WTC11 (cell line): ENCODE measurements at regions of chr11 and their contacts with region 1.

Region 1: DNA sequence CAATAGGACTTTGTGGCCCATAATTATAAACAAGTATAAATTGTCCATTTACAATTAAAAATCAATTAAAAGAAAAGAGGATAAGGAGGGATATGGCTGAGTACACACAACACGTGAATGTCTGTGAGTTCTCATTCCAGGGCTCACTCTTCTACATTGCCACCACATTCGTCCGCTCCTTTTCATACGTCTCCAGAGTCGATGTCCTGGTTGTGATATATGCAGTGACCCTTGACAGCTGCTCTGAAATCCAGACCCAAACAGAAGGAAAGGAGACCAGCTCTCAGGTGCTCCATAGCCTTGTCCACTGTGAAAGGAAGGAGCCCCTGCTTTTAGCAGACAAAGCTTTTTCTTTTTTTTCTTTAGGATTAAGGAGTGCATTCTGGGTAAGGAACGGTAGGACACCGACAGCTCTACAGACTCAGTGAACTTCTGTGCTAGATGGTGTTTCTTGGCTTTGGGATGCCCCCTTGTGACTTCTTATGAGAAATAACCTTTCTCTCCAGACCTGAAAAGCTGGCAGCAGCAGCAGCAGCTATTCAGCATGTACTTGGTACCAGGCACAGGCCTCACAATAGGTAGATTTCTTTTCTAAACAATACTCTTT is 19.7 kb upstream of the DNAJB13 start:
- DNase-seq: peak; percentile 34
- ATAC-seq: peak; percentile 99
- H3K4me3 Mint-ChIP-seq: no peak overlapping the region
- H3K27ac Mint-ChIP-seq: no peak overlapping the region
- H3K4me1 Mint-ChIP-seq: 0 out of 2 replicates have a peak, but pooled peaks cover 2% of the 10 kb centered on the region
- H3K27me3 Mint-ChIP-seq: no peaks in the 10 kb centered on the region
- CTCF ChIP-seq: no peak

Region 2: GRCh38 chr11:73729594-73730206 is 201.4 kb before region 1 on chr11:
- CTCF ChIA-PET with region 1: interaction called, 15 read pairs
- POLR2A ChIA-PET with region 1: interaction called, 4 read pairs
- DNase-seq: peak; percentile 67
- ATAC-seq: peak; percentile 92
- H3K4me3 Mint-ChIP-seq: no peak overlapping the region
- H3K27ac Mint-ChIP-seq: peak overlapping the region; percentile 34; the same call in 1 of the 2 replicates
- H3K4me1 Mint-ChIP-seq: peaks cover 9% of the 10 kb centered on the region
- H3K27me3 Mint-ChIP-seq: no peaks in the 10 kb centered on the region
- CTCF ChIP-seq: peak; percentile 64

Region 3: GRCh38 chr11:73760679-73761402 is 170.3 kb before region 1 on chr11 and contains the start of gene RAB6A:
- CTCF ChIA-PET with region 1: interaction called, 27 read pairs
- POLR2A ChIA-PET with region 1: no interaction called
- DNase-seq: peak; percentile 99
- ATAC-seq: peak; percentile 92
- H3K4me3 Mint-ChIP-seq: peak within 1 kb of the TSS; percentile 95
- H3K27ac Mint-ChIP-seq: peak within 1 kb of the TSS; percentile 94
- H3K4me1 Mint-ChIP-seq: peaks cover 28% of the 10 kb centered on the region
- H3K27me3 Mint-ChIP-seq: no peaks in the 10 kb centered on the region
- CTCF ChIP-seq: no peak
- total RNA-seq, gene RAB6A: 103 to 114 TPM (median 107 TPM) in 3 replicates

Region 4: GRCh38 chr11:73779084-73779902 is 151.8 kb before region 1 on chr11:
- CTCF ChIA-PET with region 1: interaction called, 10 read pairs
- POLR2A ChIA-PET with region 1: interaction called, 6 read pairs
- DNase-seq: peak; percentile 99
- ATAC-seq: peak; percentile 98
- H3K4me3 Mint-ChIP-seq: peak overlapping the region; percentile 98
- H3K27ac Mint-ChIP-seq: peak overlapping the region; percentile 100
- H3K4me1 Mint-ChIP-seq: peaks cover 13% of the 10 kb centered on the region
- H3K27me3 Mint-ChIP-seq: no peaks in the 10 kb centered on the region; the same call in 1 of the 2 replicates
- CTCF ChIP-seq: no peak

Region 5: DNA sequence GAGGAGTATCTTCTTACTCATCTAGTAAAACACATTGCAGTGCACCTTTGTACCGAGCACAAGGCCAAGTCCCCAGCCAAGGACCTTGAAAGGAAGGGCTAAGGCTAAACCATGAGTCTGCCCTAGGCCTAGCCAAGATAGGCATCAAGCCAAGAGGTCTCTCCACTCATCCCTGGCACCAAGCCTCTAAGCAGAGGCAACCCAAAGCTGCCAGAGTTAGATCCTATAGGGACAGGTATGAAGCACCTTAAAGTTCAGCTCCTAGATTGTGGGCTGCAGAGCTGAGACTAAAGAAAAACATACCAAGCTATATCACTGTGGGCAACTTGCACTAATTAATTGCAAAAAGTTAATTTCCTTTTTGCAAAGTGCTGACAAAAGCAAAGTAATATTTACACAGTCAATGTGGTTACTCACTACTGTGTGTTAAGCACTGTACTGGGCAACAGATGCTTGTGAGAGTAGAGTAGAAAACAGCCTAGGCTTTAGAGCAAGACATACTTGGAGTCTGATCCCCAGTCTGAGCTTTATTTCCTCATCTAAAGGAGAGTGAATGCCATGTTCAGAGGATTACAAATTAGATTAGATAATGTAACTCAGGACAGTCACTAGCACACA is 61.7 kb before region 1 on chr11:
- CTCF ChIA-PET with region 1: interaction called, 10 read pairs
- POLR2A ChIA-PET with region 1: no interaction called
- DNase-seq: no peak
- ATAC-seq: no peak; the same call in 1 of the 2 replicates
- H3K4me3 Mint-ChIP-seq: no peak overlapping the region
- H3K27ac Mint-ChIP-seq: peak overlapping the region; percentile 28
- H3K4me1 Mint-ChIP-seq: peaks cover 5% of the 10 kb centered on the region; the same call in 1 of the 2 replicates
- H3K27me3 Mint-ChIP-seq: no peaks in the 10 kb centered on the region
- CTCF ChIP-seq: no peak

Region 6: DNA sequence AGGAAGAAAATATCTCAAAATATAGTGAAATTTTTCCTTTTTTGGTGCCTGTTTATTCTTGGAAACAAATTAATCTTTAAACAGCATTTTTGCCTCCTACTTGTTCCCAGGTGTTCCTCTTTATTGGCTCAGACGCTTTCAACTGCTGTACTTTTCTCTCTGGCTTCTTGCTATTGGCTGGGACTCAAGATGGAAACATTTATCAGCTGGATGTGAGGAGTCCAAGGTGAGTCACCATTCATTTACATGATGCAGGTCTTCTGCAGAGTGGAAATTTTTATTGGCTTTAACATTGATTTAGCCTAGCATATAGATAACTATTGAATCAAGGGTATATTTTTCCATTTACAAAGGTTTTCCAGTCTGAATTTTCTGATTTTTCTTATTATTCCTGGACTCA is 14.7 kb before region 1 on chr11:
- CTCF ChIA-PET with region 1: interaction called, 11 read pairs
- POLR2A ChIA-PET with region 1: no interaction called
- DNase-seq: no peak
- ATAC-seq: no peak
- H3K4me3 Mint-ChIP-seq: no peak overlapping the region
- H3K27ac Mint-ChIP-seq: no peak overlapping the region
- H3K4me1 Mint-ChIP-seq: no peaks in the 10 kb centered on the region
- H3K27me3 Mint-ChIP-seq: no peaks in the 10 kb centered on the region
- CTCF ChIP-seq: no peak

Region 7: GRCh38 chr11:73957654-73958361 is 26.7 kb after region 1 on chr11:
- CTCF ChIA-PET with region 1: interaction called, 12 read pairs
- POLR2A ChIA-PET with region 1: no interaction called
- DNase-seq: no peak
- ATAC-seq: peak; percentile 48
- H3K4me3 Mint-ChIP-seq: peak overlapping the region; percentile 16
- H3K27ac Mint-ChIP-seq: no peak overlapping the region
- H3K4me1 Mint-ChIP-seq: peaks cover 4% of the 10 kb centered on the region; the same call in 1 of the 2 replicates
- H3K27me3 Mint-ChIP-seq: peaks cover 17% of the 10 kb centered on the region
- CTCF ChIP-seq: no peak

Region 8: GRCh38 chr11:74135127-74135840 is 204.1 kb after region 1 on chr11:
- CTCF ChIA-PET with region 1: no interaction called
- POLR2A ChIA-PET with region 1: no interaction called
- DNase-seq: no peak
- ATAC-seq: no peak
- H3K4me3 Mint-ChIP-seq: no peak overlapping the region
- H3K27ac Mint-ChIP-seq: peak overlapping the region; percentile 21; the same call in 1 of the 2 replicates
- H3K4me1 Mint-ChIP-seq: peaks cover 18% of the 10 kb centered on the region
- H3K27me3 Mint-ChIP-seq: no peaks in the 10 kb centered on the region
- CTCF ChIP-seq: no peak